B cell (primary cell): ENCODE measurements at regions of chr13 and their contacts with region 1.

Region 1: GRCh38 chr13:80342471-80343380 is 1.8 kb upstream of the SPRY2 start:
- DNase-seq: peak; percentile 79
- ATAC-seq: peak; percentile 60
- H3K4me3 ChIP-seq: peak overlapping the region; percentile 34 to 69 (median 55)
- H3K4me3 Mint-ChIP-seq: no peak overlapping the region
- H3K27ac ChIP-seq: no peak overlapping the region
- H3K27ac Mint-ChIP-seq: no peak overlapping the region
- H3K4me1 ChIP-seq: peaks cover 38 to 39% of the 10 kb centered on the region in 2 donors
- H3K4me1 Mint-ChIP-seq: peaks cover 23% of the 10 kb centered on the region
- H3K27me3 ChIP-seq: peaks cover 0 to 34% (median 17%) of the 10 kb centered on the region in 4 experiments
- H3K27me3 Mint-ChIP-seq: peaks cover 34% of the 10 kb centered on the region
- CTCF ChIP-seq: peak; percentile 96

Region 2: DNA sequence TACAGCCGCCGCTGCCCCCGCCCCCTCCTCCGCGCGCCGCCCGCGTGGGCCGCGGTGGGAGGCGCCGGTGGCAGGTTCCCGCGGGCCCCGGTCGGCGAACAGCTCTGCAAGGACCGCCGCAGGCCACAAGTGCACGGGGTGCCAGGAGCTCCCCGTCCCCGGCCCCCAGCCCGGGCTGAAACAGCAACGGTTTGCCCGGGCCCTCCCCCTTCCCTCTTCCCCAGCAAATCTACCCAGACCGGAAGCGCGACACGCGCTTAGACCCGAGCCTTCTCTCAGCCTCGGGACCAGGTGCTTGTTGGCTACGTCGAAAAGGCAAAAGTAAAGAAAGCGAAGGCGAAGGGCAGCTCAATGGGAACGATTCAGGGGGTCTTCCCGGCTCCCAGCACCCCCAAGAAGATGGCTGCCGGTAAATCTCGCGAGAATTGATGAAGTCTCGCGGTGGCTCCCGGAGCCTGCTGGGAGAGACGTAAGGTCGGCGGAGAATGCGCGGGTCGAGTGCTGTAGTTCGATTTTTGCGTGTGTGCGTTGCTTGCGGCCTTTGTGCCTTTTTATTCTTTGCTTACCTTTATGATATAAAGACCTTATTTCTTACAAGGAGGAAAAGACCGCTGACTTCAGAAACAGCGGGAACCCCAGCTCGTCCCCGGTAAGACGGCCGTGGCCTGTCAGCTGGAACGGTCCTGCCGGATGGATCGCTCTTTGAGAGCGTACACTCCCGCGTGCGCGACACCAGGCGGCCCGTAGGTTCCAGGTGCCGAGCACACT is 936.7 kb before region 1 on chr13 and contains the start of gene RBM26:
- CTCF ChIA-PET with region 1: no interaction called
- POLR2A ChIA-PET with region 1: no interaction called
- intact Hi-C with region 1: loop called (anchors 5 kb)
- DNase-seq: peak; percentile 97
- ATAC-seq: peak; percentile 84
- H3K4me3 ChIP-seq: peak within 1 kb of the TSS; percentile 69 to 95 (median 87)
- H3K4me3 Mint-ChIP-seq: no peak within 1 kb of the TSS
- H3K27ac ChIP-seq: peak within 1 kb of the TSS; percentile 94 to 95
- H3K27ac Mint-ChIP-seq: peak within 1 kb of the TSS; percentile 98
- H3K4me1 ChIP-seq: peaks cover 32 to 48% of the 10 kb centered on the region in 2 donors
- H3K4me1 Mint-ChIP-seq: peaks cover 26% of the 10 kb centered on the region
- H3K27me3 ChIP-seq: no peaks in the 10 kb centered on the region
- H3K27me3 Mint-ChIP-seq: no peaks in the 10 kb centered on the region
- CTCF ChIP-seq: peak; percentile 15
- total RNA-seq, gene RBM26: 159 and 165 TPM in 2 replicates

Region 3: GRCh38 chr13:80363890-80364503 is 21.3 kb after region 1 on chr13:
- CTCF ChIA-PET with region 1: interaction called, 17 read pairs
- POLR2A ChIA-PET with region 1: no interaction called
- intact Hi-C with region 1: no loop called
- DNase-seq: peak; percentile 20
- ATAC-seq: no peak
- H3K4me3 ChIP-seq: no peak overlapping the region
- H3K4me3 Mint-ChIP-seq: no peak overlapping the region
- H3K27ac ChIP-seq: no peak overlapping the region
- H3K27ac Mint-ChIP-seq: no peak overlapping the region
- H3K4me1 ChIP-seq: no peaks in the 10 kb centered on the region
- H3K4me1 Mint-ChIP-seq: peaks cover 1% of the 10 kb centered on the region
- H3K27me3 ChIP-seq: no peaks in the 10 kb centered on the region
- H3K27me3 Mint-ChIP-seq: no peaks in the 10 kb centered on the region
- CTCF ChIP-seq: peak; percentile 66

Region 4: GRCh38 chr13:80454245-80454644 is 111.5 kb after region 1 on chr13:
- CTCF ChIA-PET with region 1: interaction called, 3 read pairs
- POLR2A ChIA-PET with region 1: interaction called, 3 read pairs
- intact Hi-C with region 1: loop called (anchors 5 kb)
- DNase-seq: peak; percentile 81
- ATAC-seq: peak; percentile 89
- H3K4me3 ChIP-seq: peak overlapping the region in 1 of 5 experiments; percentile 16
- H3K4me3 Mint-ChIP-seq: peak overlapping the region; percentile 57
- H3K27ac ChIP-seq: peak overlapping the region; percentile 15 to 27
- H3K27ac Mint-ChIP-seq: peak overlapping the region; percentile 82
- H3K4me1 ChIP-seq: peaks cover 35 to 36% of the 10 kb centered on the region in 2 donors
- H3K4me1 Mint-ChIP-seq: peaks cover 55% of the 10 kb centered on the region
- H3K27me3 ChIP-seq: no peaks in the 10 kb centered on the region
- H3K27me3 Mint-ChIP-seq: no peaks in the 10 kb centered on the region
- CTCF ChIP-seq: no peak